ENCODE measurements at regions of chr4 and their contacts with region 1.

Region 1: DNA sequence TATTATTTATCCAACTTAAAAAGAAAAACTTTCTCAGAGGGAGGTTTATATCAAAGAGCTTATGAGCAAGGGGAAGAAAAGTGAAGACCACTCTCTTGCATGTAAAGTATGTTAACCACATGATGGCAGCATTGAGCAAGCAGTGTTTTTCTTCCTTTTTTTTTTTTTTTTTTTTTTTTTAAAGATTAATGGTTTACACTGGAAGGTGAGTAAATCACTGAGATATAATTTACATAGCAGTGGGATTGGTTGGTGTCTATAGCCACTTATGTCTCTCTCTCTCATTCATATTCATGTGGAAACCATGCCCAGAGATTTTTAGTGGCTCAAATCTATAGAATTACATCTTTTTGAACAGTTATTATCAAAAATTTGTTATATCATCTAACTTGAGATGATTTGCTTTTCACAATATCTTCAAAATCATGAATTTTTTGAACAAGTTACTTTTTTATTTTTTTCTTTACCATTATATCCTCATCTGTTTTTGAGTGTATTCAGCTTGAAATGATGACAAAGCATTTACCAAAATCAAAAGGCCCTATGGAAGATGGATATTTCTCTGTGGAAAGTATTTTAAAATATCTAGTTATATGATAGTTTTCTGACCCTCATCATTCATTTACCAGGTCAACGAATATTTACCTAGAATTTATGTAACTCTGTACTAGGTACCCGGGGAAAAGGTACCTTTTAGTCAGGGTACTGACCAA is 31.6 kb downstream of the MTHFD2L start:
- DNase-seq: no peak
- H3K4me3 Mint-ChIP-seq: no peak overlapping the region
- H3K27ac Mint-ChIP-seq: no peak overlapping the region
- H3K4me1 Mint-ChIP-seq: no peaks in the 10 kb centered on the region
- H3K27me3 Mint-ChIP-seq: no peaks in the 10 kb centered on the region

Region 2: GRCh38 chr4:74202062-74202586 is 12.6 kb after region 1 on chr4:
- CTCF ChIA-PET with region 1: interaction called, 12 read pairs
- POLR2A ChIA-PET with region 1: no interaction called
- intact Hi-C with region 1: no loop called
- DNase-seq: no peak
- H3K4me3 Mint-ChIP-seq: no peak overlapping the region
- H3K27ac Mint-ChIP-seq: no peak overlapping the region
- H3K4me1 Mint-ChIP-seq: no peaks in the 10 kb centered on the region
- H3K27me3 Mint-ChIP-seq: no peaks in the 10 kb centered on the region

Region 3: DNA sequence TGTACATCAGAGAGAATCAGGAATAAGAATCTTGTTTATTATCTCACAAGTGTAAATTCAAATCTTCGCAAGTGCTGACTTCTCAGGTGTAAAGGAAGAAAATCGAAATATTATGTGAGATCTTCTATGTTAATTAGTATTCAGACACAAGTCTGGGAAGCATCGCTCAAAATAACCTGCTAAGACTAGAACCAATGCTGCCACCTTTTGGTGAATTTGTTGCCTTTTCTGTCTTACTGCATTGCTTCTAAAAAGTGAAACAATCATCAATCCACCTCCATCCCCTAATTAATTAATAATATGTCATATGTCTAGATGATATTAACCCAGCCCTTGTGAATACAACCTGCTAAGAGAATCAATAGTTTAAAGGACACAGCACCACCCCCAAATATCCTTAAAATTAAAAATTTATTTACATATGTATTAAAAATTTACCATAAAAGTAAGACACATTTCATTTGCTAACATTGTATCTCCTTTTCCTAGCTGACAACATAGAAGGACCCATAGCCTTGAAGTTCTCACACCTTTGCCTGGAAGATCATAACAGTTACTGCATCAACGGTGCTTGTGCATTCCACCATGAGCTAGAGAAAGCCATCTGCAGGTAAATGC is 122.3 kb after region 1 on chr4:
- CTCF ChIA-PET with region 1: interaction called, 6 read pairs
- POLR2A ChIA-PET with region 1: no interaction called
- intact Hi-C with region 1: loop called (anchors 2 kb)
- DNase-seq: no peak
- H3K4me3 Mint-ChIP-seq: no peak overlapping the region
- H3K27ac Mint-ChIP-seq: no peak overlapping the region
- H3K4me1 Mint-ChIP-seq: peaks cover 8% of the 10 kb centered on the region
- H3K27me3 Mint-ChIP-seq: no peaks in the 10 kb centered on the region

Measured in activated CD4-positive, alpha-beta memory T cell treated with anti-CD3 and anti-CD28 coated beads for 36 hours (primary cell).